ENCODE measurements at regions of chr15 and their contacts with region 1.

Region 1: DNA sequence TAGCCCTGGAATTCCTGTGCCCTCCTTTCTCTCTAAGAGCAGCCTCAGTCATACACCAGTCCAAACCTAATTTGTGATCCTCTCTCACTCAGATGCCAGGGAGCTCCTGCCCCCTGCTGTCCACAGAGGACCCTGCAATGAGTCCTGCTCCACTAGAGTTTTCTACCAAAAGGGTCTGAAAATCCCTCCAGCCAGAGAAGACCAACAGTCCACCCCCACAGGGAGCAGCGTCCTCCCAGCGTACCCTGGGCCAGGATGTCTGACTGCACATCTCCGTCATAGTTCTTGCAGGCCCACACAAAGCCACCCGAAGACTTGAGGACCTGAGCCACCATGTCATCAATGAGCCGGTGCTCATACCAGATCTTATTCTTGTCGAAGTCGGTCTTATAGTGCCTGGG is 15.4 kb downstream of the IDH2 start:
- DNase-seq: peak; percentile 63
- ATAC-seq: peak; percentile 73
- H3K4me3 ChIP-seq: no peak overlapping the region
- H3K4me3 Mint-ChIP-seq: no peak overlapping the region
- H3K27ac ChIP-seq: no peak overlapping the region
- H3K27ac Mint-ChIP-seq: peak overlapping the region; percentile 46
- H3K4me1 ChIP-seq: no peaks in the 10 kb centered on the region
- H3K4me1 Mint-ChIP-seq: peaks cover 14% of the 10 kb centered on the region
- H3K27me3 ChIP-seq: no peaks in the 10 kb centered on the region
- H3K27me3 Mint-ChIP-seq: no peaks in the 10 kb centered on the region
- CTCF ChIP-seq: peak; percentile 71

Region 2: DNA sequence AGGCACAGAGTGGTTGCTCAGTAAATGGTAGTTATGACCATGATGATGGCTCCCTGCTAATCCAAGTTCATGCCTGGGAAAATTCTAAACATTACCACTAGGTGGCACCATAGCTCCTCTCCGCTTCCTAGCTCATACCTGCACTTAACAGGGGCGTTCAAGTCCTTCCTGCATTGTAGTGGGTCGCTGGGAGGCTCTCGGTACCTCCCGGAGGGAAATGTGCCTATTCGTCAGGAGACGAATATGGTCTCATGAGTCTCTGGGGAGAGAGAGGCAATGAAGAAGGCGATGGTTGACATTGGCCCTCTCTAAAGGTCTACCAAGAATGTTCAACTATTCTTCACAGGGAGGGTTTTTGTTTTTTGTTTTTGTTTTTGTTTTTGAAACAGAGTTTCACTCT is 346.7 kb before region 1 on chr15:
- CTCF ChIA-PET with region 1: interaction called, 9 read pairs
- POLR2A ChIA-PET with region 1: no interaction called
- intact Hi-C with region 1: loop called (anchors 1 kb)
- DNase-seq: peak; percentile 82
- ATAC-seq: peak; percentile 87
- H3K4me3 ChIP-seq: no peak overlapping the region
- H3K4me3 Mint-ChIP-seq: peak overlapping the region; percentile 41
- H3K27ac ChIP-seq: no peak overlapping the region
- H3K27ac Mint-ChIP-seq: no peak overlapping the region
- H3K4me1 ChIP-seq: peaks cover 0 to 2% of the 10 kb centered on the region in 2 donors
- H3K4me1 Mint-ChIP-seq: peaks cover 3% of the 10 kb centered on the region
- H3K27me3 ChIP-seq: peaks cover 0 to 4% (median 0%) of the 10 kb centered on the region in 4 experiments
- H3K27me3 Mint-ChIP-seq: peaks cover 25% of the 10 kb centered on the region
- CTCF ChIP-seq: peak; percentile 96

Measured in B cell (primary cell).